Lower lobe of right lung (tissue), 2 donors: ENCODE measurements at regions of chr15 and their contacts with region 1.

Region 1: DNA sequence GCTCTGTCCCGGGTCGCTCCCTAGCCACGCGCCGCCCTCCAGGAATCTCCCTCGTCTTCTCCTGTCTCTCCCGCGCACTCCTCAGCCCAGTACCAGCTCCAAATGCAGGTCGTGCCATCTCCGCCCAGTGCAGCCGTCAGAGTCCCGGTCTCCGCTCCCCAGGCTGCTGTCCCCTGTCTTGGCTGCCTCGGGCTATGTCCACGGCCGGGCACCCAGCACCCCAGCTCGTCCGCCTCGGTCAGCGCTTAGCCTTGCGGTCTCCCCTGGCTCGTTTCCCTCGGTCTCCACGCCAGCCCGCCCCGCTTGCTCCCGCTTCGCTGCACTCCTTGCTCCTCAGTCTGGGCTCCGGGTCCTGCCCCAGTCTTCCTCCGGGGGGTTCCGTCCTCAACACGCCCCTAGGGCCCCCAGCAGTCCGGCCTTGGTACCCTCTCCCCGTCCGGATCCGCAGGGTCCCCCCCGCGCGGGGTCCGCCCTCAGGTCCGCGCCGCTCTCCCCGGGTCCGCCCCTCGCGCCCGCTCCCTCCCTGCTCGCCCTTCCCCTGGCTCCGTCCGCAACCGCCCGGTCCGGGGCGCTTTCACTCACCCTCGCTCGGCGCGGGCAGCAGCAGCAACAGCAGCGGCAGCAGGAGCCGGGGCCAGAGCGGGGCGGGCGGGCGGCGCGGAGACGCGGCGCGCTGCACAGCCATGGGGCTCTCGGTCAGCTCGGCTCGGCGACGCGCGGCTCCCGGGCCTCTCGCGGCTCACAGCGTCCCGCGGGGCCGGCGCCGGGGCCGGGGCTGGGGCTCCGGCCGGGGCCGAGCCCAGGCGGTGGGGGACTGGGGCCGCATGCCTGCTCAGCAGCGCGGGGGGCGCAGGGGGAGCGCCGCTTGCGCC is 462 bp downstream of the IGDCC3 start:
- DNase-seq: no peak
- ATAC-seq: peak; percentile 70
- H3K4me3 ChIP-seq: peak overlapping the region; percentile 58
- H3K27ac ChIP-seq: no peak overlapping the region
- H3K4me1 ChIP-seq: peaks cover 20% of the 10 kb centered on the region
- H3K27me3 ChIP-seq: peaks cover 70% of the 10 kb centered on the region
- CTCF ChIP-seq: no peak

Region 2: GRCh38 chr15:65318870-65319356 is 58.4 kb before region 1 on chr15:
- intact Hi-C with region 1: loop called (anchors 5 kb)
- DNase-seq: peak; percentile 78
- ATAC-seq: peak; percentile 96 to 97
- H3K4me3 ChIP-seq: no peak overlapping the region
- H3K27ac ChIP-seq: no peak overlapping the region
- H3K4me1 ChIP-seq: no peaks in the 10 kb centered on the region
- H3K27me3 ChIP-seq: peaks cover 9% of the 10 kb centered on the region
- CTCF ChIP-seq: peak; percentile 92